Posterior cingulate gyrus (tissue), 11 donors: ENCODE measurements at regions of chr19 and their contacts with region 1.

Region 1: DNA sequence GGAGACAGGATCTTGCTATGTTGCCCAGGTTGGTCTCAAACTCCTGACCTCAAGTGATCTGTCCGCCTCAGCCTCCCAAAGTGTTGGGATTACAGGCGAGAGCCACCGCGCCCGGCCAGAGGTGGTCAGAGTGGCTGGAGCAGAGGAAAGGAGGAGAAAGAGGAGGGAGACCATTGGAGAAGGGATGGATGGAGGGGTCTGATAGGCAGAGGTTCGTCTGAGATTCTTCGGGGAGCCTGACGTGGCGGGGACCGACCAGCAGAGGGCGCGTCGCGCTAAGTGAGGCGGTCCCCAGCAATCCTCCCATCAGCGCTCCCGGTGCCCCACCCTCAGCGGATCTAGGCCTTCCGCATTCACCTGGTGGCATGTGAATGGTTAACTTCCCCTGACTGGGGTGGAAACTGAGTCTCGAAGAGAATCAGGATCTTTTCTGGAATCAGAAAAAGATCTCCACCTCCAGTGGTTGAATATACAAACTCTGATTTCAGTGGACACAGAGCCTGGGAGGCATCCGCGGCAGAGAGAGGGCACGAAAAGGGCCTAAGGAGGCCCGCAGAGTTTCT is 8.8 kb downstream of the GTPBP3 start:
- DNase-seq: peak in 9 of 10 donors; percentile 67 to 97 (median 80)

Region 2: GRCh38 chr19:17390665-17391370 is 44.6 kb after region 1 on chr19:
- intact Hi-C with region 1: loop called (anchors 2 kb)
- DNase-seq: peak; percentile 78 to 98 (median 85)